ENCODE measurements at regions of chr2 and their contacts with region 1.

Region 1: DNA sequence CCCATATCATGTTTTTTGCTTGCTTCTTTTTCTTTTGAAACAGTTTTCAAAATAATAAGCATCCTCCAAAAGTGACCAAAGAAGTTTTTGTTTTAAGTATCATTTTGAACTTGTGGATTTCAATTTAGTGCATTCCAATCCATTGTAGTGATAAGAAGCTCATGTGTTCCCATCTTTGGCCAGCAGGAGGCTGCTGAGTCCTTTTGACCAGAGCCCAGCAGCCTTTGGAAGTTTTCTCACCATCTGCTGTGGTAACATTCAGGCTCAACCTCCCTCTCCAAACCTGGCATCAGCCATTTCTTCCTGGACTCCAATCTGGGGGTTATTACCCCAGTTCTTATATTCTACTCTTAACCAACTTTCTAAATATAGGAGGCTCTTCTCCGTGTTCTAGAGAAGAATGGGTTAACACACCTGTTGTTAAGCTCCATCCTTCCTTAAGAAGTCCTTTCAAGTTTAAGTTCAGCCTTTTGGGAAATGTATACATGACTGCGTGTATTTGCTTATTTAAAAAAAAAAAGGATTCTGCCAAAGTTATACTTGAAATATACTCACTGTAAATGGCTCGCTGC is 39.0 kb upstream of the MAL start:
- DNase-seq: peak; percentile 75
- ATAC-seq: peak; percentile 87
- H3K4me3 Mint-ChIP-seq: no peak overlapping the region
- H3K27ac Mint-ChIP-seq: no peak overlapping the region
- H3K4me1 Mint-ChIP-seq: 0 out of 2 replicates have a peak, but pooled peaks cover 4% of the 10 kb centered on the region
- H3K27me3 Mint-ChIP-seq: no peaks in the 10 kb centered on the region
- CTCF ChIP-seq: peak; percentile 78

Region 2: GRCh38 chr2:94874277-94875008 is 112.0 kb before region 1 on chr2:
- CTCF ChIA-PET with region 1: interaction called, 11 read pairs
- POLR2A ChIA-PET with region 1: no interaction called
- DNase-seq: peak; percentile 92
- ATAC-seq: peak; percentile 80
- H3K4me3 Mint-ChIP-seq: peak overlapping the region; percentile 49
- H3K27ac Mint-ChIP-seq: no peak overlapping the region
- H3K4me1 Mint-ChIP-seq: peaks cover 10% of the 10 kb centered on the region
- H3K27me3 Mint-ChIP-seq: peaks cover 40% of the 10 kb centered on the region
- CTCF ChIP-seq: peak; percentile 83

Region 3: GRCh38 chr2:94947097-94948016 is 39.1 kb before region 1 on chr2:
- CTCF ChIA-PET with region 1: no interaction called
- POLR2A ChIA-PET with region 1: no interaction called
- DNase-seq: no peak
- ATAC-seq: no peak
- H3K4me3 Mint-ChIP-seq: no peak overlapping the region
- H3K27ac Mint-ChIP-seq: no peak overlapping the region
- H3K4me1 Mint-ChIP-seq: no peaks in the 10 kb centered on the region
- H3K27me3 Mint-ChIP-seq: peaks cover 36% of the 10 kb centered on the region
- CTCF ChIP-seq: no peak

Region 4: DNA sequence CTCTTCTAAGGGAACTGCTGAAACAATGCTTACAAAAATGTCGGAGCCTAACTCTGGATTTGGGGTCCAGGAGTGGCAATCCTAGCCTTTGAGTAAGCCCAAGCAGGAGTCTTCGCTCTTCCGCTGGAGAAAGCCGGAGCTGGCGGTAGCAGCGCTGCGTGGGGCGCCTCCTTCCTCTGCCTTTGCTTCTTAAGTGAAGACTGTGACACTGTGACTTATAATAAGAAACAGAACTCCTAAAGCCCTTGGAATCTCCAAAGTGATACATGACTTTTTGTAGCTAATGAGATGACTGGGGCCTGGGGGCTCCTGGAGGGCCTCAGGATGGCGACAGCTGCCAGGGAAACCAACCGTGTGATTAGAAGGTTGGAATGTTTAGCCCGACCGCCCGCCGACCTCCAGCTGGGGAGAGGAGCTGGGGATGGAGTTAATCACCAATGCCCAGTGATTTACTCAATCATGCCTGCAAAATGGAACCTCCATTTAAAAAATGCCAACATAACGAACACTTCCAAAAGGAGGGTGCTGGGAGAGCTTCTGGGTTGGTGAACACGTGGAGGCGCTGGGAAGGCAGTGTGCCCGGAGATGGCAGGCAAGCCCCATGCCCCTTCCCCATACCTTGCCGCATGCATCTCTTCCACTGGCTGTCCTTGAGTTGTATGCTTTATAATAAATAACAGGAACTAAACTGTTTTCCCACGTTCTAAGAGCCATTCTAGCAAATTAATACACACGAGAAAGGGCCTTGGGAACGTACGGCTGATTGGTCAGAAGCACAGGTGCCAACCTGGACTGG is 10.0 kb after region 1 on chr2:
- CTCF ChIA-PET with region 1: interaction called, 22 read pairs
- POLR2A ChIA-PET with region 1: no interaction called
- DNase-seq: peak; percentile 5
- ATAC-seq: no peak
- H3K4me3 Mint-ChIP-seq: no peak overlapping the region
- H3K27ac Mint-ChIP-seq: no peak overlapping the region
- H3K4me1 Mint-ChIP-seq: no peaks in the 10 kb centered on the region
- H3K27me3 Mint-ChIP-seq: peaks cover 19% of the 10 kb centered on the region
- CTCF ChIP-seq: no peak

Region 5: GRCh38 chr2:95062242-95063085 is 76.0 kb after region 1 on chr2:
- CTCF ChIA-PET with region 1: interaction called, 13 read pairs
- POLR2A ChIA-PET with region 1: no interaction called
- DNase-seq: no peak
- ATAC-seq: peak; percentile 74
- H3K4me3 Mint-ChIP-seq: no peak overlapping the region
- H3K27ac Mint-ChIP-seq: no peak overlapping the region
- H3K4me1 Mint-ChIP-seq: peaks cover 22% of the 10 kb centered on the region
- H3K27me3 Mint-ChIP-seq: no peaks in the 10 kb centered on the region; the same call in 1 of the 2 replicates
- CTCF ChIP-seq: no peak

Region 6: DNA sequence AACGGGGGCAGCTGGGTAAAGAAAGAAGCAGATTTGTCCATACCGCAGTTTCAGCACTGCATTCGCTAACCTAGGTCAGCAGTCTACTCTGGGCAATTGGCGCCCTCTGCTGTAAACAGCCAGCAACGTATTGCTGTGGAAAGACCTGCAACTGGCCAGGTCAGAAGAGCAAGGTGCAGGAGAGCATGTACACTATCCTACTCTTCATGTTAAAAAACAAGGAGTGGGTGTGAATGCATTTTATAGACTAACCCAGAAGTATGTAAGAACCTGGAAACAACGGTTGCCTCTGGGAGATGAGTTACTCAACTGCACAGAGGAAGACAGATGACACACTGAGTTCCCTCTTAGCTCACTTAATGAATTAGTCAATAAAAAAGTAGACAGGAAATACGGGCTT is 128.9 kb after region 1 on chr2:
- CTCF ChIA-PET with region 1: interaction called, 13 read pairs
- POLR2A ChIA-PET with region 1: no interaction called
- DNase-seq: peak; percentile 78
- ATAC-seq: peak; percentile 99
- H3K4me3 Mint-ChIP-seq: no peak overlapping the region
- H3K27ac Mint-ChIP-seq: 0 out of 2 replicates have a peak overlapping the region, but pooled peaks have one; percentile 41
- H3K4me1 Mint-ChIP-seq: peaks cover 27% of the 10 kb centered on the region
- H3K27me3 Mint-ChIP-seq: no peaks in the 10 kb centered on the region
- CTCF ChIP-seq: peak; percentile 66

Region 7: DNA sequence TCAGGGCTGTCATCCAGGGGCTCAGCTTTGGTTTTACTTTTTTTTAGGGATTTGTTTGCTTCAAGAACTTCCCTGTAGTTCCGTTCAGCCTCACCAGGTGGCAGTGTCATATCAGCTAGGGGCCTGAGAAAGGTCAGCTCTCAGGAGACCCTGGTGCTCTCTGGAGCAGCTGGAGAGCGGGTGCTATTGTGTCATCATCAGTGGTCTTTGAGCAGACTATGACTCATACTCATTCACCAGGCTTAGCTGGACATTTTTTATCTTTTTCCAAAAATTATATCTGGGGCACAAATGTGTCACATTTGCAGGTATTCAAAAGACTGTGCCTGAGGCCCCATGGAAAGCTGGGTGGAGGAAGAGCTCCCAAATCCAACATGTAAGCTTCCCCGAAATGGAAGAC is 245.2 kb after region 1 on chr2:
- CTCF ChIA-PET with region 1: no interaction called
- POLR2A ChIA-PET with region 1: no interaction called
- DNase-seq: peak; percentile 94
- ATAC-seq: peak; percentile 91
- H3K4me3 Mint-ChIP-seq: no peak overlapping the region
- H3K27ac Mint-ChIP-seq: no peak overlapping the region
- H3K4me1 Mint-ChIP-seq: no peaks in the 10 kb centered on the region
- H3K27me3 Mint-ChIP-seq: no peaks in the 10 kb centered on the region
- CTCF ChIP-seq: peak; percentile 69

Measured in WTC11 (cell line).